Activated CD4-positive, alpha-beta memory T cell treated with anti-CD3 and anti-CD28 coated beads for 36 hours (primary cell): ENCODE measurements at regions of chr22 and their contacts with region 1.

Region 1: GRCh38 chr22:45435544-45436139 is 22.1 kb downstream of the RIBC2 start:
- DNase-seq: peak; percentile 82
- H3K4me3 Mint-ChIP-seq: no peak overlapping the region
- H3K27ac Mint-ChIP-seq: no peak overlapping the region
- H3K4me1 Mint-ChIP-seq: peaks cover 10% of the 10 kb centered on the region
- H3K27me3 Mint-ChIP-seq: no peaks in the 10 kb centered on the region

Region 2: DNA sequence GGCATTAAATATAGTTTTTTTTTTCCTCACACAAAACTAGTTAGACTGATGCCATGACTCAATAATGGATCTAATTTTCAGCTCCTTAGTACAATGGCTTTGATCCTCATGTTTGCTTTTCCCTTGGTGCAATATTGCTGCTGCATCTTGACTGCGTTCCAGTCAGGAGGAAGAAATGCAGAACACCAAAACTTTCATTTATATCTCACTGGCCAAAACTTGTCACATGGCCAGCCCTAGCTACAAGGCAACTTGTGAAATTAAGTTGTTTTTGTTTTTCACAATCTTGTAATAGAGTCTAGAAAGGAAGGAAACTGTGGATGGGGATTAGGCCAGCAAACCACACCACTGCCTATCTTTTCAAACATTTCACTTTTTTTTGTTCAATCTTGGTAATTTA is 58.9 kb before region 1 on chr22:
- CTCF ChIA-PET with region 1: no interaction called
- POLR2A ChIA-PET with region 1: no interaction called
- intact Hi-C with region 1: no loop called
- DNase-seq: no peak
- H3K4me3 Mint-ChIP-seq: no peak overlapping the region
- H3K27ac Mint-ChIP-seq: no peak overlapping the region
- H3K4me1 Mint-ChIP-seq: no peaks in the 10 kb centered on the region
- H3K27me3 Mint-ChIP-seq: no peaks in the 10 kb centered on the region

Region 3: DNA sequence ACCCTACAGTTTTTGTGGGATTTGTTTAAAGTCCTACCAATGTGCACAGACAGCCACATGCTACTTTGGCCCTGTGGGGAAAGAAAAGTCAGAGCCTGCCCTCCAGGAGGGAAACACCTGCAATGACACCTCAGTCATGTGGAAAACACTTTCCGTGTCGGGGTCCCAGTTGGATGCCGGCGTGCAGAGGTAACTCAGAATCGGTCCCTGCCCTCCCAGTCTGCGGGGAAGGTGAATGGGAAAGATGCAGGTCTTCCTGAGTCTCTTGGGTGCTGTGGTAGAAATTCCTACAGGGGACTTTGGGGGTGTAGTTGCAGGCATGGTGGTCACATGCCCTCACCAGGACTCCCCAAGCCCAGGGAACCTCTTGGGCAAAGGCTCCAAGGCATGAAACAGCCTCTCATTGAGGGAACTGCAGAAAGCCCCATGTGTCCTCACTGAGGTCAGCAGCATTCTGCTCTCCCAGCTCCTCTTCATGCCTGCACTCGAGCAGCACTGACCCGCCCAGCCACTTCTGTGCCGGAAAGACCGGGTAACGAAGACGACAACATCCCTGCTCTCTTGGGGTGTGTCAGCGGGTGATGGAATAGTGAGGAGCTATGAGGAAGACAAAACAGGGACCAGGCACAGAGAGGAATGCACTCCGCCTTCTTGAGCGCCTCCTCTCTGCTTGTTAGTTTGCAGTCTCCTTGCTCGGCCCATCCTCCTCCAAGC is 17.4 kb before region 1 on chr22:
- CTCF ChIA-PET with region 1: interaction called, 10 read pairs
- POLR2A ChIA-PET with region 1: no interaction called
- intact Hi-C with region 1: no loop called
- DNase-seq: no peak
- H3K4me3 Mint-ChIP-seq: no peak overlapping the region
- H3K27ac Mint-ChIP-seq: no peak overlapping the region
- H3K4me1 Mint-ChIP-seq: peaks cover 8% of the 10 kb centered on the region
- H3K27me3 Mint-ChIP-seq: no peaks in the 10 kb centered on the region